Motor neuron (in vitro differentiated cells): ENCODE measurements at regions of chr16 and their contacts with region 1.

Region 1: GRCh38 chr16:10509534-10510025 is 70.8 kb downstream of the EMP2 start:
- ATAC-seq: peak; percentile 97 to 100 (median 99)
- H3K4me3 ChIP-seq: no peak overlapping the region
- H3K27ac ChIP-seq: no peak overlapping the region
- H3K4me1 ChIP-seq: peaks cover 0 to 4% of the 10 kb centered on the region in 2 donors

Region 2: GRCh38 chr16:8729779-8730334 is 1779.7 kb before region 1 on chr16:
- in situ Hi-C with region 1: no loop called
- ATAC-seq: no peak
- H3K4me3 ChIP-seq: no peak overlapping the region
- H3K27ac ChIP-seq: no peak overlapping the region
- H3K4me1 ChIP-seq: peaks cover 19 to 26% of the 10 kb centered on the region in 2 donors

Region 3: DNA sequence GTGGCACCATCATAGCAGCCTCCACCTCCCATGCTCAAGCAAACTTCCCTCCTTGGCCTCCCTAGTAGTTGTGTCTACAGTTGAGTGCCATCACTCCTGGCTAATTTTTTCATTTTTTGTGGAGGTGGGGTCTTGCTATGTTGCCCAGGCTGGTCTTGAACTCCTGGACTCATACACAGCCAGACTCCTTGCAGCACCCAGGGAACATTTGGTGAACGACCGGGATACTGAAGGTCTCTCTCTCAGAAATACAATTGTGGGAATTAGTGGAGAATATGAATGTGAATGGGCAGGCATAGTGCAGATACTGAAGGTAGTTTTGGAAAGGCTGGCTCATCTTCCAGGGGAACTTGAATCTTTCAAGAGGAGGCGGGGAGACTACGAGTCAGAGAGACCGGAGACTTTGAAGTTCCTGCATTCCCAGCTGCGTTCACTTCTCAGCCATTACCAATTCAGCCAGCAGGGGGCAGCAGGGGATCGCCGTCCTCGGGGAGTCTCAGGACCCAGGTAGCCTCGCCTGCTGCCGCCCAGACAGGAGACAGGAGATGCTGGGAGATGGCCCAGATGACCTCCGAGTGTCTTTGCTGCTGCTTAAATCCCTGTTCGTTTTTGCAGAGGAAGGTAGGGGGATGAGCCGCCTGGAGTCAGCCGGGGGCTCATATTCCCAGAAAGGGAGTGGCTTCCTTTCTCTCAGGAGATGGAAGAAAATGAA is 1349.6 kb before region 1 on chr16:
- in situ Hi-C with region 1: loop called in 1 of 9 experiments (anchors 25 kb)
- ATAC-seq: peak; percentile 78 to 99 (median 90)
- H3K4me3 ChIP-seq: no peak overlapping the region
- H3K27ac ChIP-seq: no peak overlapping the region
- H3K4me1 ChIP-seq: peaks cover 6 to 11% of the 10 kb centered on the region in 2 donors

Region 4: GRCh38 chr16:10256784-10257641 is 252.6 kb before region 1 on chr16:
- in situ Hi-C with region 1: loop called in 2 of 9 experiments (anchors 10 kb)
- ATAC-seq: peak in 7 of 8 experiments; percentile 47 to 94 (median 81)
- H3K4me3 ChIP-seq: no peak overlapping the region
- H3K27ac ChIP-seq: no peak overlapping the region
- H3K4me1 ChIP-seq: peaks cover 5 to 25% of the 10 kb centered on the region in 2 donors

Region 5: DNA sequence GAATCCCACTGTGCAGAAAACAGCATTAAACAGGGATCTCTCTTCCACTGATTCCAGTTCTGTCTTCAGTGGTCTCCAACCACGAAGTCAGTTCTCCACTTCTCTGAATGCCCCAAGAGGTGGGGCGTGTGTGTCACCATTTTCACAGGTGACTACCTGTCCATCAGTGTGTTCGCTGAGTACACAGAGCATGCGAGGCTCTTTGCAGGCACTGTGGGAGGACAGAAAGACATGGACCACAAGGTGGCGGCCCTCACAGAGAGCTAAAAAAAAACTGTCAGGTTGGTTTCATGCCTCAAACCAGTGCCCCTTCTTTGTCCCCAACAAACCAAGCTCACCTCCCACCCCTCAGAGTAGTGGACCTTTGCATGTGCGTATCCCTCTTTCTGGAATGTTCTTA is 57.0 kb after region 1 on chr16:
- in situ Hi-C with region 1: no loop called
- ATAC-seq: no peak
- H3K4me3 ChIP-seq: no peak overlapping the region
- H3K27ac ChIP-seq: no peak overlapping the region
- H3K4me1 ChIP-seq: no peaks in the 10 kb centered on the region

Region 6: DNA sequence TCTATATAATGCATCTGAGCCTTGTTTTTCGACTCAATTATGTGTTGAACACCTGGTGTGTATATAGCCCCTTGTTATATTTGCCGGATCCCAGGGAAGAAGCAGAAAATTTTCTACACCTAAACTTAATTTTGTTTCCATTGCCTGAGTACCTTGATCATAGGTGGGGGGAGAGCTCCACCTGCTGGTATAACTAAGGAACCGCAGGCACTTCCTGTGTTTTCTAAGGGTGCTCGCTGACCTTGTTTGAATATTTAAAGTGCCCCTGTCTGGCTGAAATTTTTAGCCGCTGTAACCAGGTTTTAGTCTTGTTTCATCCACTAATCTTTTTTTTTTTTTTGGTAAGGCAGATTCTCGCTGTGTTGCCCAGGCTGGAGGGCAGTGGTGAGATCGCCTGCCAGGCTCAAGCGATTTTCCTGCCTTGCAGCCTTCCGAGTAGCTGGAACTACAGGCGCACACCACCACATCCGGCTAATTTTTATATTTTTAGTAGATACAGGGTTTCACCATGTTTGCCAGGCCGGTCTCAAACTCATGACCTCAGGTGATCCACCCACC is 227.6 kb after region 1 on chr16:
- in situ Hi-C with region 1: loop called in 7 of 9 experiments (anchors 5 to 10 kb)
- ATAC-seq: peak; percentile 26 to 84 (median 72)
- H3K4me3 ChIP-seq: no peak overlapping the region
- H3K27ac ChIP-seq: no peak overlapping the region
- H3K4me1 ChIP-seq: peaks cover 0 to 2% of the 10 kb centered on the region in 2 donors